Right cardiac atrium (tissue), 5 donors: ENCODE measurements at regions of chr18 and their contacts with region 1.

Region 1: GRCh38 chr18:13375302-13376255 is 157.0 kb downstream of the LDLRAD4 start:
- DNase-seq: peak; percentile 85 to 88 (median 87)
- ATAC-seq: peak; percentile 81 to 94
- H3K4me3 ChIP-seq: no peak overlapping the region
- H3K27ac ChIP-seq: peak overlapping the region; percentile 48
- H3K4me1 ChIP-seq: peaks cover 15% of the 10 kb centered on the region
- H3K27me3 ChIP-seq: no peaks in the 10 kb centered on the region

Region 2: DNA sequence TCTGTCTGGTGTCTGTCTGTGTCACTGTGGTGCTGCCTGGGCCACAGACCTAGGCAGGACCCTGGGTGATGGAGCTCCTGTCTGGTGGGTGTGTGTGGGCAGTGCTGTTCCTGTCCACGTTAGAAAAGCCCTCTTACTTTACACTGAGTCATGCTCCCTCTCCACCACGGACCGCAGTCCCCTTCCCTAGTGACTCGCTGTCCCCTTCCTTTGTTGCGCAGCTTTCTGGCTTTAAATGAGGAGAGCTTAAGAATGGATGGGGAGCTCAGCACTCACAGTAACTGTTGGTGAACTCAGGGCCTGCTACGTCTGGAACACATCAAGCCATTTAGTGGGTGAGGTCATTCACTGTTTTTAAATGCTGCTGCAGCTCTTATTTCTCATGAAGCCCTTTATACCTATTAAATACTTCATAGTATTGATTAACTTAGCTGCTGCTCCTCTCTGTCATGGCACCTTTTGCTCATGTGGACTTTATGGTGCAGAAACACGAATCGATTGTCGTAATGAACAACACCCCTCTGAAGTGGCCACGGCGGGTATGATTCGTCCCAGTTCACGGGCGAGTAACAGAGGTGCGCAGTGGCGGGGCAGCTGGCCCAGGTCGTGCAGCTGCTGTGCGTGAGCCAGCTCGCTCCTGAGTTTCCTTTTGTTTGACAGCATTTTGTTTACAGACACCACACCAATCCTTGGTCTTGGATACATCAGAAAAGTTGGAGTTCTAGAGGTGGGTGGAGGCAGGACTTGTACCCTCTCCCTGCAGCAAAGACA is 56.7 kb before region 1 on chr18:
- intact Hi-C with region 1: no loop called
- DNase-seq: peak in 1 of 3 donors; percentile 51
- ATAC-seq: peak; percentile 30 to 58
- H3K4me3 ChIP-seq: no peak overlapping the region
- H3K27ac ChIP-seq: peak overlapping the region; percentile 31
- H3K4me1 ChIP-seq: peaks cover 3% of the 10 kb centered on the region
- H3K27me3 ChIP-seq: no peaks in the 10 kb centered on the region

Region 3: GRCh38 chr18:13336841-13337240 is 38.7 kb before region 1 on chr18:
- intact Hi-C with region 1: loop called in 1 of 4 experiments (anchors 5 kb)
- DNase-seq: no peak
- ATAC-seq: peak in 1 of 2 donors; percentile 49
- H3K4me3 ChIP-seq: no peak overlapping the region
- H3K27ac ChIP-seq: no peak overlapping the region
- H3K4me1 ChIP-seq: no peaks in the 10 kb centered on the region
- H3K27me3 ChIP-seq: no peaks in the 10 kb centered on the region